ENCODE measurements at regions of chr19 and their contacts with region 1.

Region 1: DNA sequence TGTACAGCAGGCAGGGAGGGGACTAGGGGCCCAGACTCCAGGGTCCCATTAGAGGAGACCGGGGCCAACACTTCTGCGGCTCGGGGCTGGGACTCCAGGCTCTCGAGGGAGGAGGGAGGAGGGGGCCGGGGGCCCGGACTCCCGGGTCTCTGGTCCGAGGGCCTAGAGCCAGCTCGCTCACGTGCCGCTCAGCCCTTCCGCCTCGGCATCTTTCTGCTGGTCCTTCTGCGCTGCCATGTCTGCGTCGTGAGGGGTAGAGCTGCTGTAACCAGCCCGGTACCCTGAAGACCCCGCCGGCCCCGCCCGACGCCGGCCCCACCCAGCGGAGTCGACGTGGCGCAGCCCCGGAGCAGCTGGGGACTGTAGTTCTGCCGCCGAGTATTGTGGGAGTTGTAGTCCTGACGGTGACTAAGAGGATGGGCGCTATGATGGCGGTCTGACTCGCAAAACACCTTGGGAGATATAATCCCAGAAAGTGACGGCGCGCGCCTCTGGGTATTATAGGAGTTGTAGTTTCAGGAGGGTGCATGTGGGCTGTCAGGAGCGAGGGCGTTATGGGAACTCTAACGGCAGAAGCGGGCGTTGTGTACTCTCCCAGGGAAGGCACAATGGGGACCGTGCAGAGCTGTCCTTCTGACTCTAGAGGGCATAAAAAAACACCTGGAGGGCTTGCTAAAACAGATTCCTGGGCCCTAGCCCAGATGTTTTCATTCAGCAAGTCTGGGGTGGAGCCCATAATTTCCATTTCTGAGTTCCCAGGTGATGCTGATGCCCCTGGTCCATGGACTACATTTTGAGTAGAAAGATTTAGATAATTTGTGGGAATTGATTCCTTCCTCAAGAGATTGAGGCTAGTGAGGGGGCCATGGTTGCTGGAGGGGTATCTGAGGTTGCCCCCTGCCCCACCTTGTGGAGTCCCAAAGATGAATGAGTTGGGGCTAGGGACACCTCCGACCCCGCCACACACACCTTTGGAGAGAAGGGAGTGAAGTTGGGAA is at the start of gene RABAC1:
- DNase-seq: no peak
- H3K4me3 ChIP-seq: peak within 1 kb of the TSS; percentile 85
- H3K27ac ChIP-seq: peak within 1 kb of the TSS; percentile 93
- H3K4me1 ChIP-seq: peaks cover 14% of the 10 kb centered on the region
- H3K27me3 ChIP-seq: no peaks in the 10 kb centered on the region
- CTCF ChIP-seq: no peak
- POLR2A ChIP-seq: peak in 1 of 2 donors; percentile 46
- total RNA-seq, gene RABAC1: 263 TPM

Region 2: DNA sequence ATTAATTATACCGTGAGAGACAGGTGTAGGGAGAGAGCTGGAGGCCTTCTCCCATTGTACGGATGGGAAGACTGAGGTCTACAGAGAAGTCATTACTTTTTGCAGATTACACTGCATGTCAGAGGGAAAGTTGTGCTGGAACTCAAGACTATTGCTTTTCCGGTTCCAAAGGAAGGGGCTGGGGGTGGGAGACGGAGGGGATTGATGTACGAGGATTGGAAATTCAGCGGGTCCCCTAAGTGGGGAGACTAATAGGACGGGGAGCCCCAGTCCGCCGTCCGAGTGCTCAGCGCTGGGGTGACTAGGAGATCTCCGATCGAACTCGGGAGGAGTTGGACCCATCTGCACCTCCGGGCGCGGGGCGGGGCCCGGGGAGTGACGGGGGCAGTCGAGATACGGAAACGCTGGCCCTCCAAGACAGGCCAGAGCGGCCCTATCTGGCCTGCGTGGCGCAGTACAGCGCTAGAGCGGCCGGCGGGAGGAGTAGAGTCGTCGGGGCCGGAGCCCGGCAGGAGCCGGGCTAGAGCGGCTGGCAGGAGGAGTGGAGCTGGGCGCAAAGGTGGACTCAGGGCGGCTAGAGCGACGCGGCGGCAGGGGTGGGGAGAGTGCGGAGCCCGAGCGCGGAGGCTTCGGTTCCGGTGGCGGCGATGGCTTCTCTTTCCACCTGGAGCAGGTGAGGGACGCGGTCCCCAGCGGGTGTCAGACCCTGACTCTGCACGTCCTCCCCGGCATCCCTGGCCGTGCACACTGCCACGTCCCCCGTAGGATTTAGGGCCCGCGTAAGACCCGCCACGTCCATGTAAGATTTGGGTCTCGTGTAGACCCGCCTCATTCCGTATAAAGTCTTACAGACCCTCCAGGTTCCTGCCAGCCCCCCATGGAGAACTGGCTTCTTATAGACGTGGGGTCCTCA is 75.3 kb before region 1 on chr19:
- intact Hi-C with region 1: loop called (anchors 5 kb)
- DNase-seq: peak in 1 of 2 donors; percentile 90
- H3K4me3 ChIP-seq: peak overlapping the region; percentile 61 to 82
- H3K27ac ChIP-seq: peak overlapping the region; percentile 78
- H3K4me1 ChIP-seq: peaks cover 46% of the 10 kb centered on the region
- H3K27me3 ChIP-seq: no peaks in the 10 kb centered on the region
- CTCF ChIP-seq: no peak
- POLR2A ChIP-seq: peak in 1 of 2 donors; percentile 44

Measured in vagina (tissue), 2 donors.